ENCODE measurements at regions of chr2 and their contacts with region 1.

Region 1: DNA sequence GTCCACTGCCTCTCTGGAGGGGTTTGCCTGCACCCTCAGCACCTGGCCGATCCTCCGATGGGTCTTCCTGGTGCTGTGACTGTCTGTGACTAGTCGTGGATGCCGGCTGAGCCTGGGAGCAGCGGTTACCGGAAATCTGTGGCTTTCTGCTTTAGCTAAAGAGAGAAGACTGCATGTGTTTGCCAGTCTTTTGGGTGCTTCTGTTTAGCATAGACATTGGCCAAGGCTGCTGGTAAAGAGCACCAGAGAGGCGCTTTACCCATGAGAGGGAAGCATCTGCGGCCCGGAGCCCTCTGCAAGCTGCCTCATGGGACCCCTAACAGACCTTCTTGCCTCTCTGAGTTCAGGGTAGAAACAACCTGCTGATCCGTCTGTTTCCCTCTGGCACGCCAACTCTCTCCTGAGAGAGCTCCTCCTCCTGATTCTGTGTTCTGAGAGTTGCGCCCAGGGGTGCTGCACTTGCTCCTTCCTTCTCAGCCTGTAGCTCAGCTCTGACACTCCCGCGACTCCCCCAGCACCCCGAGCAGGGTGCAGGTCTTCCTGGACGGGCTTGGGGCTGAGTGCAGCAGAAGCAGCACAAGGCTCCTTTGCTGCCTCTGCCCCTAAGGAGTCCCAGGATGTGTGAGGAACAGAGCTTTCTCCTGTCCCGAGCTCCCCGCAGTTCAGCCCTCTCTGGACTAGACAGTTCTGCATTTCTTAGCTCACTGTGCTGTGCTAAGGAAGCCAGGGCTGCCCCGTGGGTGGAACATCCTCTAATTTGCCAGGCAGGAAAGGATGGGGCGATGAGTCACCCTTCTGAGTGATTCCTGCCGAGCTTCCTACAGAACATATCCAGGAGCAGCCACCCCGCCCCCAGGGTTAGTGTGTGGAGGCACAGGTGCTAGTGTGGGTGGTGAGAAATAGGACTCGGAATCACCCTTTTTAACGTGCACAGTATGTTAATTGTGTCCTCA is 203.2 kb downstream of the SH3RF3 start:
- DNase-seq: peak; percentile 89
- ATAC-seq: peak; percentile 81

Region 2: DNA sequence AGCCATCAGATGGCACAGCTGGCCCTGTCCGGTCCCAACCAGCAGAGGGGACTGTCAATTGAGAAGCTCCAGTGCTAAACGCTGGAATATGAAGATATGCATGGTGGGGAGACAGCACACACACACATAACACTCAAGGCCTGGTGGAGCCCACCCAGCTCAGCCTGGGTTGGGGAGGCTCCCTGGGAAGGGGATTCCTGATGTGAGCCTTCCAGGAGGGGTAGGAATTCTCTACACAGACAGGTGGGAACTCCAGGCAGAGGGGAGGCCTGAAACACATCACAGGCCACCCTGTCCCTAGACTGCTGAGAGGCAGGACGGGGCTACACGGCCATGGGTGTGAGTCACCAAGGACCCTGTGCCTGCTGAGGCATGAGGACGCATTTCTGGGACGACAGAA is 252.6 kb before region 1 on chr2:
- intact Hi-C with region 1: no loop called
- DNase-seq: no peak
- ATAC-seq: no peak

Region 3: GRCh38 chr2:109275120-109276012 is 56.8 kb before region 1 on chr2:
- intact Hi-C with region 1: loop called (anchors 5 kb)
- DNase-seq: no peak
- ATAC-seq: no peak

Region 4: DNA sequence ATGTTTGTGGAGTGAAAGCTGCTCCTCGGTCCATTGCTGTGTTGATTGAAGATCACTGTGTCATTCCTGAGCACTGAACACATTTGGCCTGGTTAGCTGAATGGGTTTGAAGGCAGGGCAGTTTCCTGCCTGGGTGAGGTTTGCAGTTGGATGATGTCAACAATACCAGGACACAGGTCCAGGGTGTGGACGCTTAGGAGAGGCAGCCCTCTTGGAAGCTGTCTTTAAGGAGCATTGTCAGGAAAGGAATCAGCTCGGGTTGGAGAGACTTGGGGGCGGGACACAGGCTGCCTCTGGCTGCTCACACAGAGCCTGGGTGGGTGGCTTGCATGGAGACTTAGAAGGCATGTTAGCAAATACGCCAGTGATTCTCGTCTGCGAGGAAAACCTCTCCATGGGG is 43.9 kb after region 1 on chr2:
- intact Hi-C with region 1: loop called (anchors 5 kb)
- DNase-seq: peak; percentile 31
- ATAC-seq: no peak